H1 (cell line): ENCODE measurements at regions of chr5 and their contacts with region 1.

Region 1: DNA sequence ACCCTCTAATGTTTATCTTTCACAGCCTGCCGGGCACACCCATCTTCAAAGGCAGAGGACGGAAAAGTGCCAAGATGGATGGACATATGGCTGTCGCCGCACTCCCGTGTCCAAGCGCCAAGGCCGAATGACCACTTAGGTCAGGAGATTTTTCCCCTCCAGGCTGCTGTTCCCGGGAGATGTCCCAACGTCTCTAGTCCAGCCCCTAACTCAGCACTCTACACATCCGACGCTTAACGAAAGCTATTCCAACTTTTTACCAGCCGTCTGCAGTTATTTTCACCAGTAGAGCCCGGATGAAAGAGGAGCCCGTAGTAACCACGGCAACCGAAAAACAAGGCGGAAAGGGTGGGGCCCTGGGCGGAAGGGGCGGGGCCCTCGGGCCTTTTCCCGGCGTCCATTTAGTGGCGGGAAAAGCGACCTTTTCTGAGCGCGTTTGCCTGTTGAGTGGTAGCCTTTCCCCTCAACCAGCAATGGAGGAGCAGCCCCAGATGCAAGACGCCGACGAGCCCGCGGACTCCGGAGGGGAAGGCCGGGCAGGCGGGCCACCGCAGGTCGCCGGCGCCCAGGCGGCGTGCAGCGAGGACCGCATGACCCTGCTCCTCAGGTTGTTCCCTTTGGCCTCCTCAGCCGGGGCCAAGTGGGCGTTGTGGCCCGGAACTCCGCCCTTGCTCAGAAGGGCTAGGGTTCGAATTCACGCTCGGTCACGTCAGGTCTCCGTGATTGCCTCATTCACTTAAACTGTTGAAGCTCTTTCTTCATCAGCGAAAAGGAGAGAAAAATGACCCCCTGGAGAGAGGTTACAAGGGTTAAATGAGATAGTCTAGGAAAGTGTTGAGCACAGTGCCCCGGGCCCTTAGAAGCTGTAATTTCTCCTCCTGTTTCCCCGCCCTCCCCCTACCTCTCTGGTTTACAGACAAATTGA is at the start of gene CENPH:
- DNase-seq: peak; percentile 54 to 98
- H3K4me3 ChIP-seq: peak within 1 kb of the TSS; percentile 84 to 96 (median 92)
- H3K27ac ChIP-seq: peak within 1 kb of the TSS; percentile 98
- H3K4me1 ChIP-seq: no peaks in the 10 kb centered on the region
- H3K27me3 ChIP-seq: no peaks in the 10 kb centered on the region
- CTCF ChIP-seq: no peak
- EP300 ChIP-seq: no peak
- POLR2A ChIP-seq: peak; percentile 87 to 97
- RAD21 ChIP-seq: no peak
- total RNA-seq, gene CENPH: 75.7 and 82.8 TPM in 2 replicates

Region 2: DNA sequence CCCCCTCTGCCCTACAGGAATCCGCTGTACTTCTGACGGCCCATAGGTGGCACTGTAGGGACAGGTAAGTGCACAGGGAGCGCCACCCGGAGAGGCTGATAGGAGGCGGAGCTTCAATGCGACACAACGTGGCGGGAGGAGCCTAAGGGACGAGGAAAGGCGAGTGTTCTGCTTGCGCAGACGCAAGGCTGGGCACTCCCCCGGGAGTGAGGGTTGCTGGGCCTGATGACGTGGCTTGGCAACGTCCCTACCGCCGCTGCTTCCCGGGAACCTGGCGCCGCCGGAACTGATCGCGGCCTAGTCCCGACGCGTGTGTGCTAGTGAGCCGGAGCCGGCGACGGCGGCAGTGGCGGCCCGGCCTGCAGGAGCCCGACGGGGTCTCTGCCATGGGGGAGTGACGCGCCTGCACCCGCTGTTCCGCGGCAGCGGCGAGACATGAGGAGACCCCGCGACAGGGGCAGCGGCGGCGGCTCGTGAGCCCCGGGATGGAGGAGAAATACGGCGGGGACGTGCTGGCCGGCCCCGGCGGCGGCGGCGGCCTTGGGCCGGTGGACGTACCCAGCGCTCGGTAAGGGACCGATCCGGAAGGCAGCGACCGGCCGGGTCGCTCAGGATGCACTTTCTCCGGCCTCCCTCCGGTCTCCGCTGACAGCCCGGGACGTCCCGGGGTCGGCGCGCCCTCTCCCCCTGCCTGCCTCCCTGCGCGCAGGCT is 95.5 kb before region 1 on chr5 and contains the start of gene SLC30A5:
- CTCF ChIA-PET with region 1: interaction called, 6 read pairs
- POLR2A ChIA-PET with region 1: interaction called, 22 read pairs
- DNase-seq: peak; percentile 95 to 100
- H3K4me3 ChIP-seq: peak within 1 kb of the TSS; percentile 48 to 80 (median 69)
- H3K27ac ChIP-seq: peak within 1 kb of the TSS; percentile 38; the same call in 1 of the 2 replicates
- H3K4me1 ChIP-seq: no peaks in the 10 kb centered on the region; a peak in 1 of 7 replicates
- H3K27me3 ChIP-seq: no peaks in the 10 kb centered on the region
- CTCF ChIP-seq: peak; percentile 86 to 94 (median 92)
- EP300 ChIP-seq: peak in 1 of 2 experiments; percentile 49; a peak in 1 of 3 replicates
- POLR2A ChIP-seq: peak in 1 of 2 experiments; percentile 92; a peak in 2 of 3 replicates
- RAD21 ChIP-seq: peak; percentile 90
- total RNA-seq, gene SLC30A5: 36.3 and 43.5 TPM in 2 replicates

Region 3: DNA sequence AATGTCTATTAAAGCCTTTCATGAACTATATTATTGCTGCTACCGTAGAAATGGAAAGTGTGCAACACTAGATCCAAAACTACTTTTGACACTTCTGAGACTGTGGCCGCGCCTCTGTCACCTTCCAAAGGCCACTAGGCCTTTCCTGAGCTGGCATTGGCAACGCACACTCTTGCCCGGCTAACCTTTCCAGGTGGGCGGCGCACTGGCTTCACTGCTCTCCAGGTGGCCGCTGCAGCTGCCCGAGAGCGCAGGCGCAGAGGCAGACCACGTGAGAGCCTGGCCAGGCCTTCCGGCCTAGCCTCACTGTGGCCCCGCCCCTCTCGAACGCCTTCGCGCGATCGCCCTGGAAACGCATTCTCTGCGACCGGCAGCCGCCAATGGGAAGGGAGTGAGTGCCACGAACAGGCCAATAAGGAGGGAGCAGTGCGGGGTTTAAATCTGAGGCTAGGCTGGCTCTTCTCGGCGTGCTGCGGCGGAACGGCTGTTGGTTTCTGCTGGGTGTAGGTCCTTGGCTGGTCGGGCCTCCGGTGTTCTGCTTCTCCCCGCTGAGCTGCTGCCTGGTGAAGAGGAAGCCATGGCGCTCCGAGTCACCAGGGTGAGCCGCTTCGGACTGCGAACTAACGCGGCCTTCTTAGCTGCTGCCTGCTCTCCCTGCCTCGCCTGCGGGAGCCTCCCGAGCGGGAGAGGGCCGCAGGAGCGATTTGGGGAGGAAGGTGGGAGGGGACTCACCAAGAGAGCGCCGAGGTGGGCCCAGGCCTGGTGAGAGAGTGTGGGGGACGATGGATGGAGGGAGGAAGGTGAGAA is 22.5 kb before region 1 on chr5 and contains the start of gene CCNB1:
- CTCF ChIA-PET with region 1: interaction called, 3 read pairs
- POLR2A ChIA-PET with region 1: interaction called, 128 read pairs
- DNase-seq: peak; percentile 98
- H3K4me3 ChIP-seq: peak within 1 kb of the TSS; percentile 74 to 95 (median 88)
- H3K27ac ChIP-seq: peak within 1 kb of the TSS; percentile 95
- H3K4me1 ChIP-seq: peaks cover 0 to 7% (median 4%) of the 10 kb centered on the region in 4 experiments; a peak in 5 of 7 replicates
- H3K27me3 ChIP-seq: no peaks in the 10 kb centered on the region
- CTCF ChIP-seq: no peak
- EP300 ChIP-seq: no peak
- POLR2A ChIP-seq: peak; percentile 73 to 97
- RAD21 ChIP-seq: no peak
- total RNA-seq, gene CCNB1: 338 and 342 TPM in 2 replicates

Region 4: DNA sequence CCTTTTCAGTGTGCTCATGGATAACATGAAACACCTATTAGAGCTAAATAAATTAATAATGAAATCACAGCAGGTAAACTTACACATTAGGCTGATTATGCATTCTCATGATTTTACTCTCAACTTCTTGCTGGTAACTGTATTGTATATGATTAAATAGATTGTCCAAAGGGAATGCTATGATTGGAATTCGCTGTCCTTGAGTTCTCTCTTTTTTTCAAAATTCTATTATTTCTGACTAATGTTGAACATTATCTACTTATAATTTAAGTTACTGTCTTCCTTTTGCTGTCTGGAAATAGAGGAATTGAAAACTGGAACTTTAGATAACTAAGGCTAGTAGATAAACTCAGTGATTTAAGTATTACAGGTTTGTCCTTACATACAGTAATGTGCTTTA is 13.1 kb after region 1 on chr5:
- CTCF ChIA-PET with region 1: no interaction called
- POLR2A ChIA-PET with region 1: interaction called, 34 read pairs
- DNase-seq: no peak
- H3K4me3 ChIP-seq: no peak overlapping the region
- H3K27ac ChIP-seq: no peak overlapping the region
- H3K4me1 ChIP-seq: no peaks in the 10 kb centered on the region
- H3K27me3 ChIP-seq: no peaks in the 10 kb centered on the region
- CTCF ChIP-seq: no peak
- EP300 ChIP-seq: no peak
- POLR2A ChIP-seq: no peak
- RAD21 ChIP-seq: no peak

Region 5: DNA sequence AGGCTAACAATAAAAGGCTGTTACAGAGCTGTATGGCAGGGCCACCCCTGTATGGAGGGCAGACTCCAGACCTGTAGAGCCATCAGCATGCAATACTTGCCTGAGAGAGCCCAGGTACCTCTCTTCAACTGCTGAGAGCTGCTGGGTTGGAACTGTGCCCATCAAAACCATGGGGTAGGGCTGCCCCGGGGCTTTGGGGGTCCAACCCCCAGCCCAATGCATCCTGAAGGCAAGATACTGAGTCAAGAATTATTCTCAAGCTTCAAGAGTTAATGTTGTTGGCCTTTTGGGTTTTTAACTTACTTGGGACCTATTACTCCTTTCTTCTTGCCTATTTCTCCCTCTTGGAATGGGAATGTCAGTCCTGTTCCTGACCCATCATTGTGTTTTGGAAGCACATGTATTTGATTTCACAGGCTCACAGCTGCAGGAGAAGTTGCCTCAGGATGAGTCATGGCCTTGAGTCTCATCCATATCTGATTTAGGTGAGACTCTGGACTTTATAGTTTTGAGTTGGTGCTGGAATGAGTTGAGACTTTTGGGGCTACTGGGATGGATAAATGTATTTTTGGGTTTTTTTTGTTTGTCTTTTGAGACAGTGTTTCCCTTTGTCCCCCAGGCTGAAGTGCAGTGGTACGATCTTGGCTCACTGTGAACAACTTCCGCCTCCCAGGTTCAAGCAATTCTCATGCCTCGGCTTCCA is 24.2 kb after region 1 on chr5:
- CTCF ChIA-PET with region 1: interaction called, 4 read pairs
- POLR2A ChIA-PET with region 1: interaction called, 26 read pairs
- DNase-seq: no peak
- H3K4me3 ChIP-seq: no peak overlapping the region
- H3K27ac ChIP-seq: no peak overlapping the region
- H3K4me1 ChIP-seq: no peaks in the 10 kb centered on the region
- H3K27me3 ChIP-seq: no peaks in the 10 kb centered on the region
- CTCF ChIP-seq: no peak
- EP300 ChIP-seq: no peak
- POLR2A ChIP-seq: no peak
- RAD21 ChIP-seq: no peak

Region 6: DNA sequence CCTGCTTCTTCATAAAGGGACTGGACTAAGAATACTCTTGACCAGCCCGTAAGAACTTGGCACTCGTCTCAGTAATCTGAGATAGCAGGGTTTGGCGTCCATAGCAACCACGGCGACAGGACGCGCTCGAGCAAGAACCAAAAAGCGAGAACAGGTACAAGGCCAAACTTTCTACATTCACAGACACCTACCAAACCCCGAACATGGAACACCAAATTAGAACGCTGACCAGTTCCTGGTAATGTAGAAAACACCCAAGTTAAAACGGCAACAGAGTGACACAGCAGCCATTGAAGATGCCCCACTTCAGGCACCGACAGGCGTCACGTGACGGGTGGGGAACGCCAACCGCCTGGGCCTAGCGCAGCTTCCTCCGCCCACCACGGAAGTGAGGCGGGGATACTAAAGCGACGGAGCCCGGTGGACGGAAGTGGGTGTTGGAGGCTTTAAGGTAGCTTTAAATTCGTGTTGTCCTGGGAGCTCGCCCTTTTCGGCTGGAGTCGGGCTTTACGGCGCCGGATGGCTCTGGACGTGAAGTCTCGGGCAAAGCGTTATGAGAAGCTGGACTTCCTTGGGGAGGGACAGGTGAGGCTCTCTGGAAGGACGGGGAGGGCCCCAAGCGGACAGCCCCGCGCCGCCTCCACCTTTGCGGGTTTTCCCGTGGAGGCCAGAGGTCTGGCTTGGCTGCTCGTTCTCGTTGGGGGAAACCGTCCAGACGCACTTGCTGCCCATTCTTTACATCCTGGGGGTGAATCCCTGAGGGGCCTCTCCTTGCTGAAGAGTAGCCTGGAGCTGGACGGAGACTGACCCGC is 45.2 kb after region 1 on chr5 and contains the start of gene CDK7:
- CTCF ChIA-PET with region 1: no interaction called
- POLR2A ChIA-PET with region 1: interaction called, 11 read pairs
- DNase-seq: peak; percentile 41 to 88
- H3K4me3 ChIP-seq: peak within 1 kb of the TSS; percentile 83 to 96 (median 92)
- H3K27ac ChIP-seq: peak within 1 kb of the TSS; percentile 74
- H3K4me1 ChIP-seq: peaks cover 0 to 3% (median 0%) of the 10 kb centered on the region in 4 experiments; a peak in 2 of 7 replicates
- H3K27me3 ChIP-seq: no peaks in the 10 kb centered on the region
- CTCF ChIP-seq: no peak
- EP300 ChIP-seq: no peak
- POLR2A ChIP-seq: peak; percentile 53 to 85
- RAD21 ChIP-seq: no peak; a peak in 1 of 4 replicates
- total RNA-seq, gene CDK7: 52.1 and 63.4 TPM in 2 replicates